GM18951 (cell line): ENCODE measurements at regions of chr10 and their contacts with region 1.

Region 1: DNA sequence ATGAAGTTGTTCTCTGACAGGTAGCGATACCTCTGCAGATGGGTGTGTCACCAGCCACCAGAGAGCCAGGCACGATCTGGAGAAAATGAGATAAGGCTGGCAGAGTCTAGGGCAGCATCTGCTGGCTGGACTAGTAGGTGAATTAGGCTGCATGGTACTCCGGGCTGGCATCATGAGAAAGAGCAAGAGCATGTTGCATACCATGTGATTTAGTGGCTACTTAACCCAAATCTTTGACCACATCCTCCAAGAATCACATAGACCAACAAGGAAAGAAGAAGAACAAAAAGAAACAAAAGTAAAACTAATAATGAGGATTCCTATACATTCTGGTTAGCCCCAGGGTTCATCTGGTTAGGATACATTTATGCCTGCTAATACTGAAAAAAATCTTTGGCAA is 23.4 kb upstream of the FAM170B start:
- POLR2A ChIP-seq: no peak

Region 2: GRCh38 chr10:48981310-48981907 is 175.8 kb before region 1 on chr10:
- in situ Hi-C with region 1: loop called (anchors 5 kb)
- POLR2A ChIP-seq: no peak